ENCODE measurements at regions of chr16 and their contacts with region 1.

Region 1: GRCh38 chr16:19555162-19555937 is at the start of gene VPS35L:
- DNase-seq: peak; percentile 99
- ATAC-seq: peak; percentile 99
- H3K4me3 ChIP-seq: peak within 1 kb of the TSS; percentile 87
- H3K27ac ChIP-seq: peak within 1 kb of the TSS; percentile 87
- H3K4me1 ChIP-seq: peaks cover 4% of the 10 kb centered on the region
- H3K27me3 ChIP-seq: no peaks in the 10 kb centered on the region
- CTCF ChIP-seq: peak; percentile 68
- POLR2A ChIP-seq: peak; percentile 92
- RAD21 ChIP-seq: peak; percentile 21; the same call in 1 of the 2 replicates
- total RNA-seq, gene VPS35L: 20.3 and 28.0 TPM in 2 replicates

Region 2: GRCh38 chr16:19419691-19420060 is 135.7 kb before region 1 on chr16:
- CTCF ChIA-PET with region 1: no interaction called
- POLR2A ChIA-PET with region 1: no interaction called
- dilution Hi-C with region 1: no loop called
- in situ Hi-C with region 1: no loop called
- intact Hi-C with region 1: no loop called
- DNase-seq: peak; percentile 4
- ATAC-seq: no peak
- H3K4me3 ChIP-seq: no peak overlapping the region
- H3K27ac ChIP-seq: no peak overlapping the region
- H3K4me1 ChIP-seq: no peaks in the 10 kb centered on the region
- H3K27me3 ChIP-seq: no peaks in the 10 kb centered on the region
- CTCF ChIP-seq: no peak
- POLR2A ChIP-seq: no peak
- RAD21 ChIP-seq: no peak

Region 3: GRCh38 chr16:19521471-19522396 is 33.6 kb before region 1 on chr16 and contains the start of gene GDE1:
- CTCF ChIA-PET with region 1: interaction called, 4 read pairs
- POLR2A ChIA-PET with region 1: no interaction called
- dilution Hi-C with region 1: no loop called
- in situ Hi-C with region 1: no loop called
- intact Hi-C with region 1: loop called (anchors 2 kb)
- DNase-seq: peak; percentile 86
- ATAC-seq: peak; percentile 88
- H3K4me3 ChIP-seq: peak within 1 kb of the TSS; percentile 81
- H3K27ac ChIP-seq: peak within 1 kb of the TSS; percentile 72
- H3K4me1 ChIP-seq: peaks cover 3% of the 10 kb centered on the region; the same call in 1 of the 2 replicates
- H3K27me3 ChIP-seq: no peaks in the 10 kb centered on the region
- CTCF ChIP-seq: peak; percentile 42
- POLR2A ChIP-seq: peak; percentile 76
- RAD21 ChIP-seq: no peak; the same call in 1 of the 2 replicates
- total RNA-seq, gene GDE1: 62.4 and 64.2 TPM in 2 replicates

Region 4: DNA sequence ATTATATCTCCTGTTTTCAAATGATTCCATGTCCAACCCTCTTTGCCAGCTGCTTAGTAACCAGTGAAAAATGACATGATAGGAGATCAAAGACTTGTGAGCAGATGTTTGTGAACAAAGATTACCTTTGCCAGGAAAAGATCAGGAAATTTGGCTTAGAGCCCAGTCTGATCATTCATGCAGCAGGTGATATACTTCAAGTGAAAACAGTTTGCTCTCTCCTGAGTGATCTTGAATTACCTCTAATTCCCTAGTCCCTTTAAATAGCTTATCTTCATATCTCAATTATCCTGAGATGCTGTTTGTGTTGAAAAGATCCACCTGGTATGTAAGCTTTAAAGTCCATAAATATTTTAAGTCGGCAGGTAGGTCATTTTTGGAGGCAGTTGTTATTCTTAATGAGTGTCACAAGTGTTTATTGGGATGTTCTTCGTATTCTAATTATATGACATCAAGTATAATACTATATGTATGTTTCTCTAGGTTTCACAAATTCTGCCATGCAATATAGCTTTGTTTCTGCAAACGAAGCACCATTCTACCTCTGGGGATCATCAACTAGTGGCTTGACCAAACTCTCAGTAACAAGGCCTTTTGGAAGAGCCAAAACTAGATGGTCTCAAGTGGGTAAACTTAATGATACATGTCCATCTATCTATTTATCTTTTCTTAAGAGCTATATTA is 13.1 kb before region 1 on chr16:
- CTCF ChIA-PET with region 1: interaction called, 12 read pairs
- POLR2A ChIA-PET with region 1: interaction called, 3 read pairs
- dilution Hi-C with region 1: no loop called
- in situ Hi-C with region 1: no loop called
- intact Hi-C with region 1: no loop called
- DNase-seq: no peak
- ATAC-seq: no peak
- H3K4me3 ChIP-seq: no peak overlapping the region
- H3K27ac ChIP-seq: no peak overlapping the region
- H3K4me1 ChIP-seq: no peaks in the 10 kb centered on the region
- H3K27me3 ChIP-seq: no peaks in the 10 kb centered on the region
- CTCF ChIP-seq: no peak
- POLR2A ChIP-seq: no peak
- RAD21 ChIP-seq: no peak

Region 5: DNA sequence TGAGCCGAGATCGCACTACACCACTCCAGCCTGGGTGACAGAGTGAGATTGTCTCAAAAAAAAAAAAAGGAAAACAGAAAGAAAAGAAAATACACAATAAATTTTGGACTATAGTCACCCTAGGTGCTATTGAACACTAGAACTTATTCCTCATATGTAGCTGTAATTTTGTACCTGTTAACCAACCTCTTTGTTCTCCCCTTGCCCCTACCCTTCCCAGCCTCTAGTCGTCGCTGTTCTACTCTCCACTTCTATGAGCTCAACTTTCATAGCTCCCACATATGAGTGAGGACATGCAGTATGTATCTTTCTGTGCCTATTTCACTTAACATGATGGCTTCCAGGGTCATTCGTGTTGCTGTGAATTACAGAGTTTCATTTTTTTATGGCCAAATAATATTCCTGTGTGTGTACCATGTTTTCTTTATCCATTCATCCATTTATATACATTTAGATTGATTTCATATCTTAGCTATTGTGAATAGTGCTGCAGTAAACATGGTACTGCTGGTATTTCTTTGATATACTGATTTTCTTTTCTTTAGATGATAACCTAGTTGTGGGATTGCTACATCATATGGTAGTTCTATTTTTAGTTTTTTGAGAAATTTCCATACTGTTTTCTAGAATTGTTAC is 28.4 kb after region 1 on chr16:
- CTCF ChIA-PET with region 1: interaction called, 3 read pairs
- POLR2A ChIA-PET with region 1: no interaction called
- dilution Hi-C with region 1: no loop called
- in situ Hi-C with region 1: no loop called
- intact Hi-C with region 1: loop called (anchors 2 kb)
- DNase-seq: peak; percentile 55
- ATAC-seq: peak; percentile 91
- H3K4me3 ChIP-seq: no peak overlapping the region
- H3K27ac ChIP-seq: no peak overlapping the region
- H3K4me1 ChIP-seq: no peaks in the 10 kb centered on the region
- H3K27me3 ChIP-seq: no peaks in the 10 kb centered on the region
- CTCF ChIP-seq: peak; percentile 68
- POLR2A ChIP-seq: no peak
- RAD21 ChIP-seq: peak; percentile 54

Region 6: GRCh38 chr16:19700319-19700781 is 145.0 kb after region 1 on chr16:
- CTCF ChIA-PET with region 1: no interaction called
- POLR2A ChIA-PET with region 1: no interaction called
- dilution Hi-C with region 1: no loop called
- in situ Hi-C with region 1: no loop called
- intact Hi-C with region 1: loop called (anchors 5 kb)
- DNase-seq: peak; percentile 70
- ATAC-seq: peak; percentile 60
- H3K4me3 ChIP-seq: no peak overlapping the region
- H3K27ac ChIP-seq: no peak overlapping the region
- H3K4me1 ChIP-seq: peaks cover 24% of the 10 kb centered on the region
- H3K27me3 ChIP-seq: no peaks in the 10 kb centered on the region
- CTCF ChIP-seq: no peak
- POLR2A ChIP-seq: no peak
- RAD21 ChIP-seq: no peak

Region 7: DNA sequence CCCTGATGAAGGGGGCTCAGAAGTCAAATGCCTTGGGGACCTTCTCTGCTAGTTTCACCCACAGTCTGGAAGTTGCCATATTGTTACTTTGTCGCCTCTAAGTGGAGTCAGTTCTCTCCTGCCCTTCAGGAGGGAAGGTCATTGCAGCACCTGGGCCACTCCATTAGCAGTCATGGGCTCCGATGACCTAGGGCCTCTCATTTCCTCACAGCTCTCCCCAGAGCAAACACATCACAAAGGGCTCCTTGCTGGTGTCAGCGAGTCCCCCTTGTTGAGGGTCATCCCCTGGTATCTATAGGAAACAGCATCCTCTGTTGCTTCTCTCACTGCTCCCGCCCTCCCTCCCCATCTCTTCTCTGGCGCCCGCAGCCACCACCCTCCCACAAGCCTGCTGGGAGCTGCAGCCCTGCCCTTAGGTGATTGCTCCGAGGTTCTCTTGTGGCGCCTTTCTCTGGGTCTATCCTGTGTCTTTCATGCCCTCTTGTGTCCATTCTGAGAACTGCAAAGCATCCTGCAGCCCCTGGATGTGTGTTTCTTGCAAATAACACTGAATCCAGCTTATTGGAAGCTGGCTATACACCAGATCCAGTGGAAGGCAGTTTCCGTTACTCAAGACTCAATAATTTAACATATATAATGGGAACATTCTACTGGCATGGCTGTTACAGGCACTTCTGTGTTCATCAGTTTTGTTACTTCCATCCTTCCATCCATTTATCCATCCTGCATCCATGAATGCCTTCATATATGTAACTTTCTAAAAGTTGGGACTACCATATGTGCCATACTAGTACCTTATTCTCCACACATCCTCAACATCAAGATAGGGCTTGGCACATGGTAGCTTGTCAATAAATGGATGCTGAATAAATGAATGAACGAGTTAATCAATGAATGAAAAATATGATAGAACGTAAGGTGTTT is 828.0 kb after region 1 on chr16:
- CTCF ChIA-PET with region 1: interaction called, 3 read pairs
- POLR2A ChIA-PET with region 1: no interaction called
- dilution Hi-C with region 1: no loop called
- in situ Hi-C with region 1: no loop called
- intact Hi-C with region 1: loop called (anchors 5 kb)
- DNase-seq: peak; percentile 54
- ATAC-seq: peak; percentile 96
- H3K4me3 ChIP-seq: no peak overlapping the region
- H3K27ac ChIP-seq: no peak overlapping the region
- H3K4me1 ChIP-seq: no peaks in the 10 kb centered on the region
- H3K27me3 ChIP-seq: no peaks in the 10 kb centered on the region
- CTCF ChIP-seq: peak; percentile 67
- POLR2A ChIP-seq: no peak
- RAD21 ChIP-seq: peak; percentile 60

Measured in IMR-90 (cell line).